AG04449 (cell line): ENCODE measurements at regions of chr7 and their contacts with region 1.

Region 1: DNA sequence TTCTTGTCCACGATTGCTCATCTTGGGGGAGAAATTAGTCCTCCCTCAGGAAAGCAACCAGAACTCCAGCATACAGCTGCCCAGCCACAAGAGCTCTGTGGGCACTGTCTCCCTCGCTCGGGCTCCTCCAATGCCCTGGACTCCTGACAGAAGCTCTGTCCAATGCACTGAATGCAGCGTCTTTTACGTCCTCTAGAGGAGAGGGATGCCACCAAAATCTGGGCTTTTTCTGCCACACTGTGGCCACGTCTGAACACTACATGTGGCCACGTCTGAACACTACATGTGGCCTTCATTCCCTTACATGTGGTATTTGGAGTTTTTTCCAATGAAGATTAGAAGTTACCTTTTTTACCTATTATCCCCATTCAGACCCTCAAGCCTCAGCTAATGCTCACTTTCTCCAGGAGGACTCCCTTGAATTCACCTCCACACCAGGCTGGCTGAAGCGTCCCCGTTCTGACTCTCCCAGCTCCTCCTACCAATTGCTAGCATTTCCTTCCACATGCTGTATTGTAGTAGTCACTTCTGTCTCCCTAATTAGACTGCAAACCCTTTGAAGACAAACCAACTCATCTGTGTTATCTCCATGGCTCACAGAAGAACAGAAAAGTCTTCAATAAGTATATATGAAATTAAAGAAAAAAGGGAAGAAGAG is 134.3 kb upstream of the PDE1C start:
- DNase-seq: peak; percentile 40
- H3K4me3 ChIP-seq: no peak overlapping the region
- CTCF ChIP-seq: peak; percentile 77

Region 2: GRCh38 chr7:31443457-31443856 is 761.0 kb before region 1 on chr7:
- CTCF ChIA-PET with region 1: interaction called, 23 read pairs
- POLR2A ChIA-PET with region 1: no interaction called
- DNase-seq: peak; percentile 7
- H3K4me3 ChIP-seq: no peak overlapping the region
- CTCF ChIP-seq: peak; percentile 61

Region 3: GRCh38 chr7:31735991-31736982 is 468.2 kb before region 1 on chr7:
- CTCF ChIA-PET with region 1: interaction called, 65 read pairs
- POLR2A ChIA-PET with region 1: no interaction called
- DNase-seq: no peak
- H3K4me3 ChIP-seq: no peak overlapping the region
- CTCF ChIP-seq: peak; percentile 81

Region 4: DNA sequence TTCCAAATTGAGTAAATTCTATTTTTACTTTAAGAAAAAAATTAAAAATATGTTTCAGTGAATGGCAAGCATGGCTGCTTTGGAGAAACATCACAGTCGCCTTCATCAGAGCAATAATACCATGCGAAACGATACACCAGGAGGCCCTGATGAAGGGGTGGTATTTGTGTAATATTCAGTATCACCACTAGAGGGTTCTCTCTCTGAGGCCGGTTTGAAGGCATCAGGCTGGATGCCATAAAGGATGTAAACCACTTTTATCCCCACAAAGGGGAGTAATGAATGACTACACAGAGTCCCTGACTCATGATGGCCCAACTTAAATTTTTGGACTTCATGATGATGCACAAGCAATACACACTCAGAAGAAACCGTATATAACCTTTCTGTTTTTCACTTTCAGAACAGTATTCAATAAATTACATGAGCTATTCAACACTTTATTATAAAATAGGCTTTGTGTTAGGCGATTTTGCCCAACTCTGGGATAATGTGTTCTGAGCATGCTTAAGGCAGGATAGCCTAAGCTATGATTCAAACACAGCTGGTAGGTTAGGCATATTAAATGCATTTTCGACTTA is 422.0 kb before region 1 on chr7:
- CTCF ChIA-PET with region 1: interaction called, 17 read pairs
- POLR2A ChIA-PET with region 1: no interaction called
- DNase-seq: no peak
- H3K4me3 ChIP-seq: no peak overlapping the region
- CTCF ChIP-seq: peak; percentile 52

Region 5: DNA sequence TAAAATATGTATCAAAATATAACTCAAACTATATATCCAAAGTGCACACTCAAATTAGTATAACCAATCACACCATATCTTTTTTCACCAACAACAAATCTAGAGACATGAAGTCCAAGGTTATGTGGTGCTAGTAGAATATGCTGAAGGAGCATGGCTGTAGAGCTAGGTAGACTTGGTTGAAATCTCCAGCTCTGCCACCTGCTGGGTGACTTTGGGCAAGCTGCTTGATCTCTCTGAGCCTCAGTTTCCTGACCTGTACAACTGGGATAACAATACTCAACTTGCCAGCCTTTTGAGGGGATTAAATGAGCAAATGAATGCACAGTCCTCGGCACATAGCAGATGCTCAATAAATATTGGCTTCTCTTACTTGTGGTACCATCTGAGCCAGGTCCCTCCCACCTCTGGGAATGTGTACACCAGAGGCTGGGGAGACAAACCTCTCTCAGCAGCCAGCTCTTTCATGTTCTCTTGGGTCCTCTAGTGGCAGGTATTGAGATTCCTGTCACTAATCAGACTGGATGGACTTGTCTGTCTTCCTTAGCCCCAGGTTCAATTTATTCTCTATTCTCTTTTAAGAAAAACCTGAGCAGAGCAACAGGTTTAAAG is 40.0 kb before region 1 on chr7:
- CTCF ChIA-PET with region 1: interaction called, 16 read pairs
- POLR2A ChIA-PET with region 1: no interaction called
- DNase-seq: no peak
- H3K4me3 ChIP-seq: no peak overlapping the region
- CTCF ChIP-seq: peak; percentile 60

Region 6: DNA sequence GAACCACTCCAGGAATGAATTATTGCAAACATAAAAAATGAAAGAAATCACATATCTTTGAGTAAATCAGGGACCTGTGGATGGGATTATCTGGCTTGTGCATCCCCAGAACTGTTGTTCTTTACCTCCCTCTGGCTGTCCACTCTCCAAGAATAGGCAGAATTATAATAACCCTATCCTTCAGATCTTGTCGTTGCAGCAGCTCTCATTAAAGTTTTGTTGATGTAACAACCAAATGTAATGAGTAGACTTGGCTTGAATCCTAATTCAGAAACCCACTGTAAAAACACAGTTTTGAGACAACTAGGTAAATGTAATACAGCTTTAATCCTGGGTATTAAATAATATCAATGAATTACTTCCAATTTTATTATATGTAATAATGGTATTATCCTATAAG is 269.5 kb after region 1 on chr7:
- CTCF ChIA-PET with region 1: interaction called, 255 read pairs
- POLR2A ChIA-PET with region 1: no interaction called
- DNase-seq: no peak
- H3K4me3 ChIP-seq: no peak overlapping the region
- CTCF ChIP-seq: no peak

Region 7: GRCh38 chr7:32490127-32490822 is 285.8 kb after region 1 on chr7 and contains the start of gene LSM5:
- CTCF ChIA-PET with region 1: interaction called, 12 read pairs
- POLR2A ChIA-PET with region 1: no interaction called
- DNase-seq: no peak
- H3K4me3 ChIP-seq: peak within 1 kb of the TSS; percentile 87
- CTCF ChIP-seq: no peak

Region 8: GRCh38 chr7:32500922-32501341 is 296.4 kb after region 1 on chr7:
- CTCF ChIA-PET with region 1: no interaction called
- POLR2A ChIA-PET with region 1: no interaction called
- DNase-seq: no peak
- H3K4me3 ChIP-seq: no peak overlapping the region
- CTCF ChIP-seq: no peak